Naive thymus-derived CD4-positive, alpha-beta T cell (primary cell): ENCODE measurements at regions of chr1 and their contacts with region 1.

Region 1: GRCh38 chr1:110916669-110917306 is 43.8 kb downstream of the CD53 start:
- DNase-seq: peak in 1 of 9 donors; percentile 34
- ATAC-seq: peak; percentile 53
- H3K4me3 ChIP-seq: no peak overlapping the region
- H3K4me3 Mint-ChIP-seq: peak overlapping the region in 5 of 10 donors; percentile 6 to 79 (median 19)
- H3K27ac ChIP-seq: no peak overlapping the region
- H3K27ac Mint-ChIP-seq: peak overlapping the region in 1 of 9 donors; percentile 75
- H3K4me1 ChIP-seq: peaks cover 0 to 4% of the 10 kb centered on the region in 2 donors
- H3K4me1 Mint-ChIP-seq: peaks cover 7 to 16% (median 13%) of the 10 kb centered on the region in 7 donors
- H3K27me3 ChIP-seq: no peaks in the 10 kb centered on the region
- H3K27me3 Mint-ChIP-seq: peaks cover 0 to 12% (median under 1%) of the 10 kb centered on the region in 5 donors

Region 2: DNA sequence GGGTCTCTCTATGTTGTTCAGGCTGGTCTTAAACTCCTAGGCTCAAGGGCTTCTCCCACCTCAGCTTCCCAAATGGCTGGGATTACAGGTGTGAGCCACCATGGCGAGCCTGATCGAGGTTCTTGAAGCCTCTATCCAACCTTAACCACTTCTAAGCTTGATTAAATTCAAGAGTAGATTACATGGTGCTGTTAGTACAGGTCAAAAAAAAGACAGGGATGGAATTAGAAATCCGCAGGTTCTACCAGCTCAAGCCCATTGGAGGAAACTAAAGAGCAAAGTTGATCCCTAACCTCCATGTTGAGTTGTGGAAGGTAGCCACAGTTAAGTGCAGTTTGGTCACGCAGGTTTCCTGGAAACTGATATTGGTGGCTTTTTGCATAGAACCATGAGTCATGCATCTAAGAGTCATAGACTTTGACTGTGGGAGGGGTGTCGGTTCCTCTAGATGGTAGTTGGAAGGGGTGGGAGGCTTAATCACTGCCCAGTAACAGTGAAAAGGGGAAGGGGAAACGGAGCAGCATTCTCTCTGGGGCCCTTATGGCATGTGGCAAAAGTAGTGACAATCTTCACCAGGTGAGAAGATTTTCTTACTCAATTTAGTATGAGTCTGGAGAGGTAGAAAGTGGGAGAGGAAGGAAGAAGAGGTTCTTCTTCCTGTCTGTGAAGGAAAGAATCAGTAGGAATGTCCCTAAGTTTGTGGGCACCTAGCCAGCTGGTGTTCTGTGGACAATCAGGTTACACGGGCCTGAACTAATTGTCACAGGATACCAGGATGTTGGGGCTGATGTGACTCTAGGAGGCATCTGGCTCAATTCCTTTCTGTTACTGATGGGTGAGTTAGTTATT is 36.8 kb before region 1 on chr1:
- CTCF ChIA-PET with region 1: no interaction called
- POLR2A ChIA-PET with region 1: no interaction called
- intact Hi-C with region 1: loop called in 1 of 2 experiments (anchors 2 kb)
- DNase-seq: peak in 2 of 9 donors; percentile 63 to 65
- ATAC-seq: peak; percentile 73
- H3K4me3 ChIP-seq: peak overlapping the region; percentile 41
- H3K4me3 Mint-ChIP-seq: peak overlapping the region; percentile 78 to 96 (median 88)
- H3K27ac ChIP-seq: peak overlapping the region; percentile 44
- H3K27ac Mint-ChIP-seq: peak overlapping the region; percentile 89 to 99 (median 93)
- H3K4me1 ChIP-seq: peaks cover 69 to 77% of the 10 kb centered on the region in 2 donors
- H3K4me1 Mint-ChIP-seq: peaks cover 71 to 96% (median 85%) of the 10 kb centered on the region in 7 donors
- H3K27me3 ChIP-seq: no peaks in the 10 kb centered on the region
- H3K27me3 Mint-ChIP-seq: no peaks in the 10 kb centered on the region

Region 3: GRCh38 chr1:110896090-110896489 is 20.7 kb before region 1 on chr1:
- CTCF ChIA-PET with region 1: no interaction called
- POLR2A ChIA-PET with region 1: no interaction called
- intact Hi-C with region 1: loop called in 1 of 2 experiments (anchors 2 kb)
- DNase-seq: peak in 6 of 9 donors; percentile 43 to 60 (median 54)
- ATAC-seq: peak; percentile 58
- H3K4me3 ChIP-seq: no peak overlapping the region
- H3K4me3 Mint-ChIP-seq: peak overlapping the region; percentile 38 to 95 (median 66)
- H3K27ac ChIP-seq: peak overlapping the region; percentile 52
- H3K27ac Mint-ChIP-seq: peak overlapping the region; percentile 88 to 98 (median 93)
- H3K4me1 ChIP-seq: peaks cover 62 to 76% of the 10 kb centered on the region in 2 donors
- H3K4me1 Mint-ChIP-seq: peaks cover 59 to 89% (median 84%) of the 10 kb centered on the region in 7 donors
- H3K27me3 ChIP-seq: no peaks in the 10 kb centered on the region
- H3K27me3 Mint-ChIP-seq: no peaks in the 10 kb centered on the region